AG04450 (cell line): ENCODE measurements at regions of chrX and their contacts with region 1.

Region 1: GRCh38 chrX:56978172-56978571 is 17.2 kb downstream of the SPIN3 start:
- DNase-seq: no peak
- H3K4me3 ChIP-seq: no peak overlapping the region
- H3K27ac ChIP-seq: no peak overlapping the region
- H3K27me3 ChIP-seq: no peaks in the 10 kb centered on the region
- CTCF ChIP-seq: peak; percentile 66

Region 2: DNA sequence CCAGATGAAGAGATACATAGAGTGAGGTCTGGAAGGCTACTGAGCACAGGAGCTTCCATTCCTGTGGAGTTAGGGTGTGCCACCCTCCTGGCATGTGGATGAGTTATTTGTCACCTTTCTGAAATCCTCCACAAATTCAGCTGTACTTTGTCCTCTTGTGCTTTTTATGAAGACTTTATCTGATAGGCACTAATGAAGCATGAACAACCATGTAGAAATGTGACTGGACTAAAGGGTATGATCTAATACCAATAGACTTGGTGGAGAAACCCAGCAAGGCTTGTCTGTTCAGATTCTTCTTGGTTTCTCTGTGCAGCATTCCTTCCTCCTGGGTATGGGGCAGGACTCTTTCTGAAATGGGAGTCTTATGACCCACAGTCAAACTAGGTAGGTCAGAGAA is 239.5 kb before region 1 on chrX:
- CTCF ChIA-PET with region 1: no interaction called
- POLR2A ChIA-PET with region 1: no interaction called
- DNase-seq: no peak
- H3K4me3 ChIP-seq: no peak overlapping the region
- H3K27ac ChIP-seq: no peak overlapping the region
- H3K27me3 ChIP-seq: no peaks in the 10 kb centered on the region
- CTCF ChIP-seq: no peak

Region 3: GRCh38 chrX:56764153-56764974 is 213.8 kb before region 1 on chrX:
- CTCF ChIA-PET with region 1: interaction called, 10 read pairs
- POLR2A ChIA-PET with region 1: no interaction called
- DNase-seq: peak; percentile 47
- H3K4me3 ChIP-seq: no peak overlapping the region
- H3K27ac ChIP-seq: no peak overlapping the region
- H3K27me3 ChIP-seq: no peaks in the 10 kb centered on the region
- CTCF ChIP-seq: peak; percentile 65

Region 4: GRCh38 chrX:56803850-56804681 is 174.1 kb before region 1 on chrX:
- CTCF ChIA-PET with region 1: interaction called, 12 read pairs
- POLR2A ChIA-PET with region 1: no interaction called
- DNase-seq: no peak
- H3K4me3 ChIP-seq: no peak overlapping the region
- H3K27ac ChIP-seq: no peak overlapping the region
- H3K27me3 ChIP-seq: no peaks in the 10 kb centered on the region
- CTCF ChIP-seq: no peak

Region 5: GRCh38 chrX:57121162-57121741 is 143.1 kb after region 1 on chrX and contains the start of gene SPIN2B:
- CTCF ChIA-PET with region 1: no interaction called
- POLR2A ChIA-PET with region 1: no interaction called
- DNase-seq: peak; percentile 36
- H3K4me3 ChIP-seq: peak within 1 kb of the TSS; percentile 75
- H3K27ac ChIP-seq: no peak within 1 kb of the TSS
- H3K27me3 ChIP-seq: no peaks in the 10 kb centered on the region
- CTCF ChIP-seq: no peak
- polyA plus RNA-seq, gene SPIN2B: 9.7 and 11.0 TPM in 2 replicates

Region 6: DNA sequence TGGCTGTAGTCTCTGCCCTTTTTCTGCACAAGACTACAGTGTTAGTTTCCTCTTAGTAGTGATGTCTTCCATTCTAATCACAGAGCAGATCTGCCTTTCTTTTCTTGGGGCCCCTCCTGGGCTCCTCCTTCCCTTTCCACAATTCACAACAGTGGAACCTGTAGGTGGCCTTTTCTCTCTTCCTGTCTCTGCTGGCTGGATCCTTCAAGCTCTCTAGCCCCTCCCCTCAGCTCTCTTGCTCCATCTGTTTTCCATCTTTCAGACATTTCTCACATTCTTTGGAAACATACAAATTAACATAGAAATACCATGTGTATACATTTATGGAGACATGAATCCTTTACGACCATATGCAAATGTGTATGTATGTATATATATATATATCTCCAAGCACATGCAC is 159.3 kb after region 1 on chrX:
- CTCF ChIA-PET with region 1: no interaction called
- POLR2A ChIA-PET with region 1: no interaction called
- DNase-seq: no peak
- H3K4me3 ChIP-seq: peak overlapping the region; percentile 41
- H3K27ac ChIP-seq: no peak overlapping the region
- H3K27me3 ChIP-seq: no peaks in the 10 kb centered on the region
- CTCF ChIP-seq: no peak

Region 7: DNA sequence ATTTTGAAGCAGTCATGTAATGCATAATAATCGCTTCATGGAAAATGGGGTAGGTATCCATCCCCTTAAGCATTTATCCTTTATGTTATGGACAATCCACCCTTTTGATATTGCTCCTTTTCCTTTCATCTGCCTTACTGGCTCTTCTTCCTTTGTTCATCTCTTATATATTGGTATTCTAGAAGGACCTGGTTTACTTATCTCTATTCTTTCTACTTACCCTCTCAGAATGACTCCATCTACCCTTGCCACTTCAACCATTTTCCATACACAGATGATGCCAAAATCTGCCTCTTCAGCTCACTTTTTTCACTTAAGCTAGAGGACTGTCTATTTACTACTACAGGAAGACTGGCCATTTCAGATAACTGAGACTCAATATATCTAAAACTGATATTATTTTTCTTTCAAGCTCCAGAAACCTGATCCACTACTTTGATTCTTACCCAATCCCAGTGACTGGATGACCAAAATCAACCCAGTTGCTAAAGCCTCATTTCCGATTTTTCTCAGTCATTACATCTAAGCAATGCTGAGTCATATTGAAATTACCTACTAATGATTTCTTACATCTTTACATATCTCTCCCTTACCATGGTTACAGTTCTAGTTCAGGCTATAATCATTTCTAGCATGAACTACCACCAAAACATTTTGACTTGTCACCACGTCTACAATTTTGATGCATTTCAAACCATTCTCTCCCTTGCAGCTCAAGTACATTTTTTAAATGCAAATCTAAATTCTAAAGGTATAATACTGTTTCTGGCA is 402.0 kb after region 1 on chrX:
- CTCF ChIA-PET with region 1: no interaction called
- POLR2A ChIA-PET with region 1: no interaction called
- DNase-seq: no peak
- H3K4me3 ChIP-seq: no peak overlapping the region
- H3K27ac ChIP-seq: no peak overlapping the region
- H3K27me3 ChIP-seq: no peaks in the 10 kb centered on the region
- CTCF ChIP-seq: no peak